Left colon (tissue), 2 donors: ENCODE measurements at regions of chr3 and their contacts with region 1.

Region 1: DNA sequence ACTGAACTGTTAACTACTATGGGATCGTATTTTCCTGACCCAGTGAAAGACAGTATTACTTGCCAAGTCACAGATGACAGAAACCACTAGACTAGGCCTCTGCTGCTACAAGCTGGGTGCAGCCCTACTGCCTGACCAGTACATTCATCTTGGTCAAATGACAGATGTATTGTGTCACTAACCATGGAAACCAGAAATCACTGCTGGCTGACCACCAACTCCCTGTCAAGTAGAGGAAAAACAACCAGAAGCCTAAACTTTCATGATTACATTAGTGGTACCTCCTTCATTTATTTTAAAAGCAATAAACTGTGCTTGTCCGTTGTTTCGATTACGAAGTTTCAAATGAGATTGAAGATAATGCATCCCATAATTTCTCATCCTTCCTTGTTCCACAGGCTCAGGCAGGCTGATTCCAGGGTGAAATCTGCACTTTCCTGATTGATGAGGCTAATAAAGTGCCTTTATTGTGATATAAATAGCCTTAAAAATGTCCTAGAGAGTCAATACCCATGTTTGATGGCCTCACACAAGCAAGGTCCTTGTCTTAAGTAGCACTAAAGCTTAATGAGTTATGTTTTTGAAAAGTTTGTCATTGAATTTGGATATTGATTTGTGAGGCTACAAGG is 309.7 kb downstream of the LSAMP start:
- DNase-seq: peak; percentile 23 to 29
- ATAC-seq: no peak

Region 2: GRCh38 chr3:115871735-115872134 is 263.8 kb before region 1 on chr3:
- intact Hi-C with region 1: no loop called
- DNase-seq: no peak
- ATAC-seq: no peak

Region 3: GRCh38 chr3:115947325-115947724 is 188.2 kb before region 1 on chr3:
- intact Hi-C with region 1: no loop called
- DNase-seq: no peak
- ATAC-seq: no peak

Region 4: GRCh38 chr3:116453666-116454346 is 318.2 kb after region 1 on chr3:
- intact Hi-C with region 1: loop called in 1 of 2 experiments (anchors 10 kb)
- DNase-seq: no peak
- ATAC-seq: no peak